Activated CD4-positive, alpha-beta memory T cell treated with anti-CD3 and anti-CD28 coated beads for 36 hours (primary cell): ENCODE measurements at regions of chr16 and their contacts with region 1.

Region 1: DNA sequence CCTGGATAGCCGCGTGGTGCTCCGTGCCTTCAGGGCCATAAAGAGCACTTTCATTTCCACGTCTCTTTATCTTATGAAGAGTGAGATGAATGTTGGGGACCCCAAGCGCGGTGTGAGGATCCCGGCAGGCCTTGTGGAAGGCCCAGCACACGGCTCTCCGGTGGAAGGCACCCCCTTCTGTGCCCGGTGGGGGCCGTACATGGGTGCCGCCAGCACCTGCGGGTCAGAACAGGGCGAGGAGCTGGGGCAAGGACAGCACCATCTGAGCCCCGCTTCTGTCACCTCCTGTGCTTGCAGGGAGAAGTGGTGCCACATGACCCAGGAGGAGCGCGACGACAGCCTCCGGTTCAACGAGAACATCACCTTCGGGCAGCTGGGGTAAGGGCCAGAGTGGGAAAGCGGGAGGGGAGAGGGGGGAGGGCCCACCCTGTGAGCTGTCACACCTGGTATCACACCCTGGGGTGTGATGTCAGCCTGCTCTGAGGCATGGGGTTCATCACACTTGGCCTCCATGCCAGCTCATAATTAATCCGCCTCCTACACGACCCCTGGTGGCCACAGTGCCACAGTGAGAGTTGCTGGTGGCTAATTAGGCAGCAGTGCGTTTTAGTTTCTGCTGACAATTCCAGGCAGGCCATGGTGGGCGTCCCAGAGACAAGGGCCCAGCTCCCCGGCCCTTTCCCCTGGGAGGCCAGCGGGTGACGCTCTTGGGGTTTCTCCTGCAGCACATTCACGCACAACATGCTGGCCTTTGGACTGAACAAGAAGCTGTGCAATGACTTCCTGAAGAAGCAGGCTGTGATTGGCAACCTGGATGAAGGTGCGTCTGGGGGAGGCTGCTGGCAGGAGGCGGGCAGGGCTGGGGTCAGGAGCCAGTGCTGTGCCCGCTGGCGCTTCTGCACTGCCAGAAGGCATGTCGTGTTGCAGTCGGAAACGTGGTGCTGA is 25.7 kb downstream of the CIBAR2 start:
- DNase-seq: peak; percentile 86
- H3K4me3 Mint-ChIP-seq: no peak overlapping the region
- H3K27ac Mint-ChIP-seq: no peak overlapping the region
- H3K4me1 Mint-ChIP-seq: peaks cover 10% of the 10 kb centered on the region
- H3K27me3 Mint-ChIP-seq: no peaks in the 10 kb centered on the region

Region 2: GRCh38 chr16:84925092-84925772 is 161.4 kb before region 1 on chr16:
- CTCF ChIA-PET with region 1: interaction called, 13 read pairs
- POLR2A ChIA-PET with region 1: no interaction called
- intact Hi-C with region 1: no loop called
- DNase-seq: peak; percentile 78
- H3K4me3 Mint-ChIP-seq: no peak overlapping the region
- H3K27ac Mint-ChIP-seq: no peak overlapping the region
- H3K4me1 Mint-ChIP-seq: no peaks in the 10 kb centered on the region
- H3K27me3 Mint-ChIP-seq: peaks cover 3% of the 10 kb centered on the region

Region 3: GRCh38 chr16:84982434-84982833 is 104.2 kb before region 1 on chr16:
- CTCF ChIA-PET with region 1: interaction called, 13 read pairs
- POLR2A ChIA-PET with region 1: no interaction called
- intact Hi-C with region 1: no loop called
- DNase-seq: no peak
- H3K4me3 Mint-ChIP-seq: no peak overlapping the region
- H3K27ac Mint-ChIP-seq: no peak overlapping the region
- H3K4me1 Mint-ChIP-seq: peaks cover 26% of the 10 kb centered on the region
- H3K27me3 Mint-ChIP-seq: no peaks in the 10 kb centered on the region

Region 4: GRCh38 chr16:85010931-85011845 is 75.4 kb before region 1 on chr16 and contains the start of gene ZDHHC7:
- CTCF ChIA-PET with region 1: interaction called, 18 read pairs
- POLR2A ChIA-PET with region 1: interaction called, 3 read pairs
- intact Hi-C with region 1: no loop called
- DNase-seq: peak; percentile 89
- H3K4me3 Mint-ChIP-seq: peak within 1 kb of the TSS; percentile 99
- H3K27ac Mint-ChIP-seq: peak within 1 kb of the TSS; percentile 92
- H3K4me1 Mint-ChIP-seq: peaks cover 37% of the 10 kb centered on the region
- H3K27me3 Mint-ChIP-seq: no peaks in the 10 kb centered on the region
- total RNA-seq, gene ZDHHC7: 23.5 to 25.1 TPM

Region 5: GRCh38 chr16:85055503-85056210 is 31.0 kb before region 1 on chr16:
- CTCF ChIA-PET with region 1: interaction called, 18 read pairs
- POLR2A ChIA-PET with region 1: no interaction called
- intact Hi-C with region 1: loop called (anchors 1 kb)
- DNase-seq: peak; percentile 90
- H3K4me3 Mint-ChIP-seq: peak overlapping the region; percentile 64
- H3K27ac Mint-ChIP-seq: peak overlapping the region; percentile 90
- H3K4me1 Mint-ChIP-seq: peaks cover 39% of the 10 kb centered on the region
- H3K27me3 Mint-ChIP-seq: no peaks in the 10 kb centered on the region

Region 6: DNA sequence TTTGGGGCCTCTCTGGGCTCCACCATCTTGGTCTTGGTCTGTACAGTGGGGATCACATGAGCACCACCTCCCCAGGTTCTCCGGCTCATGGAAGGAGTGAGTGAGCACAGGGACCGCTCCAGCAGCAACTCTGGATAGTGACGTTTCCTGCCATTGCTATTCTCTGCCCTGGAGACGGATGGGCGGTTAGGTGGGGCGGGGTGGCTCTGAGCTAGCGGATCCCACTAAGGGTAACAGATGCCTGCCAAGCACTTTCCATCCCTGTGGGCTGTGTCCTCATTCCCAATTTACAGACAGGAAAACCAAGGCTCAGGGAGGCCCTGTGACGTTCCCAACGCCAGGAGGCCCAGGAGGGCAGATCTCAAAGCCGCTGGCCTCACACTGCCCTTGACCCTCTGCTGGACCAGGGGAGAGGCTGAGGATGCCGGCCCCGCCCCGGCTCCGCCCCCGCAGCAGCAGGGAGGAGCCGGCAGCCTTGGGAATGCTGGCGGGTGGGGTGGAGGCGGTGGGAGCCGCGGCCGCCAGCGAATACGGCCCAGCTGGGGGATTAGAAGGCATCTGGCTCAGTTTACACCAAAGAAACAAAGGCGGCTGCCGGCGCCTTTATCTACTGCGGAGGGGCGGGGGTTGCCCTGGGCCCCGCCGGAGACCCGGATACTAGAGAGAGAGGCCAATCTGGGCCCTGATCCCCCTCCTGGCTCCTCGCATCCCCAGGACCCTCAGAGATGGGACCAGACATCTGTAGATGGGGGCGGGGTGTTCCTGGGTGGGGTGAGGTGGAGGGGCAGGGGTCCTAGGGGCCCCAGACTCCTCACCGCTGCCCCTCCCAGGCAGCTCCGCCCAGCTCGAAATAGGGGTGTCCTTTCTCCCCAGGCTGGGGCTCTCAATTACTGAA is 147.9 kb after region 1 on chr16:
- CTCF ChIA-PET with region 1: no interaction called
- POLR2A ChIA-PET with region 1: no interaction called
- intact Hi-C with region 1: no loop called
- DNase-seq: no peak
- H3K4me3 Mint-ChIP-seq: no peak overlapping the region
- H3K27ac Mint-ChIP-seq: no peak overlapping the region
- H3K4me1 Mint-ChIP-seq: no peaks in the 10 kb centered on the region
- H3K27me3 Mint-ChIP-seq: peaks cover 18% of the 10 kb centered on the region